A549 (cell line): ENCODE measurements at regions of chr2 and their contacts with region 1.

Region 1: GRCh38 chr2:105166688-105167087 is 74.9 kb upstream of the GPR45 start:
- DNase-seq: no peak
- ATAC-seq: no peak
- H3K4me3 ChIP-seq: no peak overlapping the region
- H3K27ac ChIP-seq: no peak overlapping the region
- H3K4me1 ChIP-seq: no peaks in the 10 kb centered on the region
- CTCF ChIP-seq: no peak
- EP300 ChIP-seq: no peak
- POLR2A ChIP-seq: no peak
- RAD21 ChIP-seq: no peak

Region 2: GRCh38 chr2:105179469-105180372 is 13.0 kb after region 1 on chr2:
- CTCF ChIA-PET with region 1: interaction called, 10 read pairs
- POLR2A ChIA-PET with region 1: no interaction called
- DNase-seq: peak; percentile 65 to 86
- ATAC-seq: peak; percentile 79 to 93
- H3K4me3 ChIP-seq: no peak overlapping the region
- H3K27ac ChIP-seq: no peak overlapping the region
- H3K4me1 ChIP-seq: 0 out of 3 replicates have a peak, but pooled peaks cover 3% of the 10 kb centered on the region
- CTCF ChIP-seq: peak; percentile 60
- EP300 ChIP-seq: no peak
- POLR2A ChIP-seq: no peak
- RAD21 ChIP-seq: peak; percentile 60 to 61; a peak in 4 of 5 replicates